Cardiac septum (tissue), 1 donor: ENCODE measurements at regions of chr5 and their contacts with region 1.

Region 1: GRCh38 chr5:111550279-111551020 is 38.1 kb upstream of the STARD4 start:
- DNase-seq: peak; percentile 86

Region 2: GRCh38 chr5:111127453-111128195 is 422.8 kb before region 1 on chr5:
- intact Hi-C with region 1: no loop called
- DNase-seq: no peak

Region 3: DNA sequence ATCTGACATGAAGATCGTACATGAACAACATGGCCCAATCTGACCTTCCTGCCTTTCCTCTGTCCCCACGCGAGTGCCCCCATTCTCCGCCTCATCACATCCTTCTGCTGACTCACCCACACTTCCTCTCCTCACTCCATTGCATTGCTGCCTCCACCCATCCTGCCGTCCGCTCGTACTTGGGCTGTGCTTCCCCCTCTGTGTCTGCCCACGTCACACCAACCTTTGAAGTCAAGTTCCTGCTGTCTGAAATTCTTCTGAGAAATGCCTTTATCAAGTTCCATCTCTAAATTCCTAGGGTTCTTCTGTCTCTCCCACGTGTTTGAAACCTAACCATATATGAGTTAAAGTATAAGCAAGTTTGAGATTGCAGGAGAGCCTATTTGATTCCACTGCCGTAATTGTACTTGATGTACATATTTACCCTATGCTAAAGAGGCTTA is 20.1 kb before region 1 on chr5:
- intact Hi-C with region 1: loop called (anchors 2 kb)
- DNase-seq: peak; percentile 88

Region 4: DNA sequence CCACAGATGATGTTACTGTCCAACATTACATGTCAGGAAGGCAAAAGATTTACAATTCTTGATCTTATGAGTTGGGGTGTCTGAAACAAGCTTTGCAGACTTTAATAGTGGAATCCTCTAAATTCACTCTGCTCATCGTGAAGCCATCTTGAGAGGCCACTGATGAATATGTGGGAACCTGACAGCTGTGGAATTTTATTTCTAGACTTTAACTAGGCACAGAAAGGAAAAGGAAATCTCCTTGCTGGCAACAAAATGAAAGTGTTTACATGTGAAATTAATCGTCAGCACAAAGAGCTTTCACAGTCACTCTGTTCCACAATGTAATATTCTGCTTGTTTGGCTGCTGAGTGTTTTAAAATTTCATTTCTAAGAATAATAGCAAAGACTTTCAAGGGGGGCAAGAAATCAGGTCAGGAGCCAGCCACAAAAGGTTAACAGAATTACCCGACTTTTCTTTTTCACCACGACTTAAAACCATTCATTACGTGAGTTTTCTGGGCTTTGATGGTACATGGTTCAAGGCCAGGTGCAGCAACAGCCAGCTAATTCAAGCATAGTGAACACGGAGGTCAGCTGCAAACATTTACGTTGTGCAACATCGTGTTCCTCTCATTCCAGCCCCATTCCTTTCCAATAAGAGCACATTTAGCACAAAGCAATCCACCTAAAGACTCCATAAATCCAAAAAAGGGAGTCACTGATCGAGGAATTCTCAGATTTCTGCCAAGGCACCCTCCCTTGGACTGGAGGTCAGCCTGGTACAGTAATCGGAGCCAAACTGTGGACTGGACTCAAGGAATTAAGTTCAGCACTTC is 191.9 kb after region 1 on chr5:
- intact Hi-C with region 1: loop called (anchors 5 kb)
- DNase-seq: no peak

Region 5: DNA sequence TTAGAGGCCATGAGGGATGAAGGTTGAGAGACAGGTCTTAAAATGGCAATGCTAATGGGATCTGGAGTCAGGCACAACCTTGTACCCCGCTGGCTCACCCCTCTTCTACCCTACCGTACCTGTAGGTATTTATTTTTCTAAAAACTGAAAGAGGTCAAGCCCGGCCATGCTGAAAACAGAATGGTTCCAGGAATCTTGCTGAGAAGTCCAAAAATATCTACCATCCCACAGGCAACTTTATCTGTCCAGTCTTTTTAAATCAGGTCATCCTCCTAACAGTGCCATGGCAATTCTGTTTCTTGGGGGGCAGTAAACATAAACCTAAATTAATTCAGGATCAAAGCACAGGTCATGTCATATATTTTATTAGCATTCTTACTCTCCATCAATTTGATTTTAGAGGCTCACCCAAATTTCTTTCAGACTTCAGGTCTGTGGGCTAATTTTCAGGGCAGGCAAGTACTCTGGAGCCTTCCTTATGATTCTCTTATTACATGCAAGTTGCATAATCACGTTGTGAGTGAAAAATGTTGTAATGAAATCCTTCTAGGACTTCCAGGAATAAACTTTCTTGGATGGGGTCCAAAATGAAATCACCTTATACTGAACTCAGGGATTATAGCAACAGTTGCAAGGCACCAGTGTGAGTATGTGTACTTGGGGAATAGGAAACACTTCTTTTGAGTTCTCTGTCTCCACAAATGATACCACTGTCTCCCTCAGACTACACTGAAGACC is 309.3 kb after region 1 on chr5:
- intact Hi-C with region 1: loop called (anchors 5 kb)
- DNase-seq: no peak

Region 6: GRCh38 chr5:112146323-112147226 is 596.1 kb after region 1 on chr5:
- intact Hi-C with region 1: loop called (anchors 1 kb)
- DNase-seq: no peak